Activated CD4-positive, alpha-beta T cell treated with anti-CD3 and anti-CD28 coated beads, Interleukin-2, amount 10 ng/mL, durations not matched to agents 24 days and 14 days (primary cell): ENCODE measurements at regions of chr2 and their contacts with region 1.

Region 1: GRCh38 chr2:74833418-74834233 is at the start of gene HK2:
- DNase-seq: peak; percentile 96
- H3K4me3 Mint-ChIP-seq: peak within 1 kb of the TSS; percentile 96
- H3K27ac Mint-ChIP-seq: peak within 1 kb of the TSS; percentile 97
- H3K4me1 Mint-ChIP-seq: peaks cover 47% of the 10 kb centered on the region
- H3K27me3 Mint-ChIP-seq: peaks cover 6% of the 10 kb centered on the region
- total RNA-seq, gene HK2: 118 and 120 TPM in 2 replicates

Region 2: GRCh38 chr2:73385595-73386341 is 1447.9 kb before region 1 on chr2 and contains the start of gene ALMS1:
- intact Hi-C with region 1: loop called (anchors 5 kb)
- DNase-seq: peak; percentile 97
- H3K4me3 Mint-ChIP-seq: peak within 1 kb of the TSS; percentile 92
- H3K27ac Mint-ChIP-seq: peak within 1 kb of the TSS; percentile 93
- H3K4me1 Mint-ChIP-seq: peaks cover 23% of the 10 kb centered on the region
- H3K27me3 Mint-ChIP-seq: peaks cover 8% of the 10 kb centered on the region
- total RNA-seq, gene ALMS1: 19.6 and 21.9 TPM in 2 replicates

Region 3: GRCh38 chr2:74653985-74654882 is 179.4 kb before region 1 on chr2 and contains the start of gene SEMA4F:
- intact Hi-C with region 1: loop called (anchors 2 kb)
- DNase-seq: peak; percentile 98
- H3K4me3 Mint-ChIP-seq: peak within 1 kb of the TSS; percentile 84
- H3K27ac Mint-ChIP-seq: peak within 1 kb of the TSS; percentile 38
- H3K4me1 Mint-ChIP-seq: peaks cover 10% of the 10 kb centered on the region
- H3K27me3 Mint-ChIP-seq: peaks cover 17% of the 10 kb centered on the region
- total RNA-seq, gene SEMA4F: 3.5 and 4.8 TPM in 2 replicates

Region 4: GRCh38 chr2:74715078-74715791 is 118.4 kb before region 1 on chr2:
- intact Hi-C with region 1: loop called (anchors 1 kb)
- DNase-seq: peak; percentile 95
- H3K4me3 Mint-ChIP-seq: peak overlapping the region; percentile 92
- H3K27ac Mint-ChIP-seq: peak overlapping the region; percentile 26
- H3K4me1 Mint-ChIP-seq: peaks cover 7% of the 10 kb centered on the region
- H3K27me3 Mint-ChIP-seq: peaks cover 25% of the 10 kb centered on the region

Region 5: GRCh38 chr2:74845217-74846011 is 11.8 kb after region 1 on chr2:
- intact Hi-C with region 1: loop called (anchors 1 kb)
- DNase-seq: peak; percentile 78
- H3K4me3 Mint-ChIP-seq: peak overlapping the region; percentile 67
- H3K27ac Mint-ChIP-seq: peak overlapping the region; percentile 55
- H3K4me1 Mint-ChIP-seq: peaks cover 91% of the 10 kb centered on the region
- H3K27me3 Mint-ChIP-seq: no peaks in the 10 kb centered on the region

Region 6: DNA sequence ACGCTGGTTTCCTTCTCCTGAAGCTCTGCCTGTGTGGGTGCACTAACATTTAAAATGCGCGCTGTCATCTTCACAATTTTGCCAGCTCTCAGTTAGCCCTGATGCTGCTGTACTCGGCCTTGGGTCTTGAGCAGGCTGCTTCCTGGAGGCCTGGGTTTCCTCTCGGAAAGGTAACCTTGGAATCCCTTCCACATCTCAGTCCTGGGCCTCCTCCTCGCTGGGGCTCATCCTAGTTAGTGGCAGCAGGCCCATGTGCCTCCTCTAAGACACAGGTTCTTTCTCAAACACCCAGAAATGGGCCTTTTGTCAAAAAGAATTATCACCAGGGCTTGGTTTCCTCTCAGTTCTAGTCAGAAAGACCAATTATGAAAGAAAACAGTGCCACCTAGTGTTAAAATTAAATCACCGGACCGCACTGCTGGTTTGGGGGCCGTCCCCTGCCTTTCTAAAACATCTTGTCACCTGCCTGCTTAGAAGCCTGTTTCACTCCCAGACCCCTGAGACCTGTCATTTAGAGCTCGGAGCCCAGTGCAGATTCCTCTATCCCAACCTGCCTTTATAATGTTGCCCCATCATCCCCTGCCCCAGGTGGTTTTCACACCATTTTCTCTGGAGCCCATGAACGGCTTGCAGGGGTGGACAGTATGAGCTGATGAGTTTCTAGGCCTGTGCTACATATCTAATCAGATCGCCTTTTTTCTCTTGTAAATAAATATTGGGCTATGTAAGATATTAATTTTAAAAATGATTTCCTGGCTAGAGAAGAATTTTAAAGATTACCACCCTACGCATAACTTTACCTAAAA is 42.7 kb after region 1 on chr2:
- intact Hi-C with region 1: loop called (anchors 2 kb)
- DNase-seq: peak; percentile 86
- H3K4me3 Mint-ChIP-seq: no peak overlapping the region
- H3K27ac Mint-ChIP-seq: peak overlapping the region; percentile 42
- H3K4me1 Mint-ChIP-seq: peaks cover 2% of the 10 kb centered on the region
- H3K27me3 Mint-ChIP-seq: no peaks in the 10 kb centered on the region

Region 7: GRCh38 chr2:74958274-74959105 is 124.9 kb after region 1 on chr2 and contains the start of gene POLE4:
- intact Hi-C with region 1: loop called (anchors 1 kb)
- DNase-seq: peak; percentile 98
- H3K4me3 Mint-ChIP-seq: peak within 1 kb of the TSS; percentile 82
- H3K27ac Mint-ChIP-seq: peak within 1 kb of the TSS; percentile 86
- H3K4me1 Mint-ChIP-seq: peaks cover 47% of the 10 kb centered on the region
- H3K27me3 Mint-ChIP-seq: no peaks in the 10 kb centered on the region
- total RNA-seq, gene POLE4: 53.1 and 58.3 TPM in 2 replicates